OCI-LY7 (cell line): ENCODE measurements at regions of chr13 and their contacts with region 1.

Region 1: DNA sequence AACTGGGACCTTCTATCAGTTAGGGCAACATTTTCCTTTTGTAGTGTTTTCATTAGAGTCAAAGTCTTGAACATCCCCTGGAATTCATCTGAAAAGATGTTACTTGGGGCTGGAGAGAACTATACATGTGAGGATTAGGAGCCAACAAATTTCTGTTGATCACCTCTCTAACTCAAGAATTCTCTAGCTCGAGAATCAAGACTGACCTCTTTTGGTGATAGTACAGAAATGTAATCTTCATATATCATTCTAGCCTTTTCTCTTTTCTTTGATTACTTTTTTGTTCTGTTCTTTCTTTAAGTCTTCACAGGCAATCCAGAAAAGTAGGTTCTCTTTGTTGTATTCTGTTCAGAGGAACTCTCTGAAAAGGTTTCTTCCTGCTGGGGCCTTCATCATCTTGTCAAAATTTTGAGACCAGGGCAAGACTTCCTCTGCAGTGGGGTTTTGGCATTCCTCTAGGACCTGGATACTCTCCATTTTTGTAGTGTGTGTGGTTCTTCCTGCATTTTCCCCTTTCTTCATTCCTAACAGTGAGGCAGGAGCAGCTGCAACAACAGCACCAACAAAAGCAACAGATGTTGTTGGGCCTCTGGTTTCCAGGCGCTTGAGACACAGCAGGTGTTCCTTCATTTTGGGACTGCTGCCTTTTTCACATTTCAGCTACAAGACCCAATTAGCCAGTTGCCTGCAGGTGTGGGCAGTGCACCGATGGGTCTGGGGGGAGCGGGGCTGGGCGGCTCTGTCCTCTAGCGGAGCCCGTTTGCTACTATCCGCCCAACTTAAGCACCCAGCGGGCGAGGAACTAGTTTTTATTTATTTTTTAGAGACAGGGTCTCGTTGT is 26.2 kb downstream of the ELF1 start:
- DNase-seq: peak; percentile 86
- H3K4me3 ChIP-seq: peak overlapping the region; percentile 35
- H3K27ac ChIP-seq: peak overlapping the region; percentile 99
- H3K4me1 ChIP-seq: peaks cover 93% of the 10 kb centered on the region
- CTCF ChIP-seq: peak; percentile 64

Region 2: GRCh38 chr13:40639221-40639681 is 353.6 kb before region 1 on chr13:
- CTCF ChIA-PET with region 1: no interaction called
- POLR2A ChIA-PET with region 1: no interaction called
- intact Hi-C with region 1: no loop called
- DNase-seq: no peak
- H3K4me3 ChIP-seq: no peak overlapping the region
- H3K27ac ChIP-seq: no peak overlapping the region
- H3K4me1 ChIP-seq: peaks cover 75% of the 10 kb centered on the region
- CTCF ChIP-seq: no peak

Region 3: DNA sequence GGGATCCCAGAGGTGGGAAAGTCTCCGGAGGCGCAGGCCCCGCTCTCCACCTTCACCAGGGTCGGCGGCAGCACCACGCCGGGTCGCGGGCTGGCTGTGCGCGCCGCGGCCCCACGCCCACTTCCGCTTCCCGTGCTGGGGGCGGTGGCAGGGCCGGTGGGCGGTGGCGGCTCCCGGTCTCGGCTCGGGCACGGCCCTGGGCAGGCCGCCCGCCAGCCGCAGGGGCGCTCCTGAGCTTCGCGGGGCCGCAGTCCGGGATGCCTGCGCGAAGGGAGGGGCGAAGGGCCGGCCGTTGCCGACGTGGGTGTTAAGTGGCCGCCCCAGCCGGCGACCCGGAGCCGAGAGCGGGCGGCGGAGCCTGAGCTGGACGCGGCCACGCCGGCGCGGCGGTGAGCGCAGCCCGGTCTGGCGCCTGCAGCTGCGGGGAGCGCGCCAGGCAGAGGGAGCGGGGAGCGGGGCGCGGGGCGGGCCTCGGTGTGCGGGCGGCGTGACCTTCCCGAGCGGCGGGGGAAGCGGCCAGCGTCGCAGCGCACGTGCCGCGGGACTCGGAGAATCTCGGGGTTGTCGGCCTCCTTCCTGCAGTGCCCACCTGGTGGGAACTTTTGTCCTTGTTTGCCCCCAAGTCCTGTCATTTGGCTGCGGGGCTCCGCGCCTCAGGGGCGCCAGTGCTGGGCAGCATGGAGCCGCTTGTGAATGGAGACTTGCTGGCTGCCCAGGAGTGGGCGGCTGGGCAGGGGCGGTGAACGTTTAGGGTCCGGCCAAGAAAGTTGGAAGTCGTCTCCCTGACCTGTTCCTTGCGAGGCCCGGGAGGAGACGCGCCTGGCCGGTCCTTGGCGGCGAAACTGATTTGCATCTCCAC is 203.4 kb before region 1 on chr13 and contains the start of gene SLC25A15:
- CTCF ChIA-PET with region 1: no interaction called
- POLR2A ChIA-PET with region 1: interaction called, 3 read pairs
- intact Hi-C with region 1: loop called (anchors 5 kb)
- DNase-seq: peak; percentile 89
- H3K4me3 ChIP-seq: peak within 1 kb of the TSS; percentile 72
- H3K27ac ChIP-seq: peak within 1 kb of the TSS; percentile 92
- H3K4me1 ChIP-seq: peaks cover 46% of the 10 kb centered on the region
- CTCF ChIP-seq: peak; percentile 47
- total RNA-seq, gene SLC25A15: 61.3 and 71.0 TPM in 2 replicates

Region 4: GRCh38 chr13:41004875-41005693 is 12.2 kb after region 1 on chr13:
- CTCF ChIA-PET with region 1: no interaction called
- POLR2A ChIA-PET with region 1: interaction called, 139 read pairs
- intact Hi-C with region 1: loop called (anchors 1 kb)
- DNase-seq: peak; percentile 89
- H3K4me3 ChIP-seq: peak overlapping the region; percentile 64
- H3K27ac ChIP-seq: peak overlapping the region; percentile 99
- H3K4me1 ChIP-seq: peaks cover 95% of the 10 kb centered on the region
- CTCF ChIP-seq: no peak

Region 5: DNA sequence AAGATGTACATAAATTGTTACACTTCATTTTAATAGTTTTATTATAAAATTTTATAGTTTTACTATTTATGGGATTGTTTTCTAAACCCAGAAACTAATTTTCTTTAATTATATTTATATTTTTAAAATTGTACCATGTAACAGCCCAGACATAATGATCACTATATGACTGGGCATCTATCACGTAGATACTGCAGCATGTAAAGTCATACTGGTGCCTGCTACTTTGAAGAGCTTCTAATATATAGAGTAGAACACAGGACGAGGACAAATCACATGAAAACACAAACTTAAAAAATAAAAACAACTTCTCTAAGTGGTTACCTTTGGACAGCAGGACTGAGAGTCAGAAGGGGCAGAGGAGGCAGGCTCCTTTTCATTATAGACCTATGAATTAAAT is 20.9 kb after region 1 on chr13:
- CTCF ChIA-PET with region 1: no interaction called
- POLR2A ChIA-PET with region 1: interaction called, 139 read pairs
- intact Hi-C with region 1: no loop called
- DNase-seq: no peak
- H3K4me3 ChIP-seq: peak overlapping the region; percentile 84
- H3K27ac ChIP-seq: peak overlapping the region; percentile 94
- H3K4me1 ChIP-seq: peaks cover 53% of the 10 kb centered on the region
- CTCF ChIP-seq: no peak

Region 6: DNA sequence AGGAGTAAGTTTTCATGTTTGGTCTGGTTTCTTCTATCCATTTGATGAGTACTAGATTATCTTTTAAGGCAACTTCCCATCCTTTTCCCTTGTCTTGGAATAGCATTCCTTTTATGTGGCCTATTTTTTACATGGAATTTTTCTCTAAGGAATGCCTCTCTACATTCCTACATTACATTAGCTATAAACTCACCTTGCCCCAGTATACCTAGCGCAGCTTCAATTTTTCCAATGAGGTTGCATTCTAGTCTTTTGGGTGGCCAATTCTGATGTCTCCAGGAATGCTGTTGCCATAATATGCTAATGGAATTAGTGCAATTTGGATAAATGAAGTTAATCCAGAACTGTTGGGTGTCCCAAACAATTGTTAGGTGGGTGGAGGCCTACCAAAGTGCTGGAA is 105.9 kb after region 1 on chr13:
- CTCF ChIA-PET with region 1: no interaction called
- POLR2A ChIA-PET with region 1: no interaction called
- intact Hi-C with region 1: no loop called
- DNase-seq: no peak
- H3K4me3 ChIP-seq: no peak overlapping the region
- H3K27ac ChIP-seq: no peak overlapping the region
- H3K4me1 ChIP-seq: no peaks in the 10 kb centered on the region
- CTCF ChIP-seq: no peak